Activated naive CD4-positive, alpha-beta T cell treated with anti-CD3 and anti-CD28 coated beads for 36 hours (primary cell): ENCODE measurements at regions of chr13 and their contacts with region 1.

Region 1: GRCh38 chr13:31424117-31424729 is 224.4 kb downstream of the B3GLCT start:
- DNase-seq: peak; percentile 77
- H3K4me3 Mint-ChIP-seq: no peak overlapping the region
- H3K27ac Mint-ChIP-seq: no peak overlapping the region
- H3K4me1 Mint-ChIP-seq: no peaks in the 10 kb centered on the region
- H3K27me3 Mint-ChIP-seq: peaks cover 12% of the 10 kb centered on the region

Region 2: DNA sequence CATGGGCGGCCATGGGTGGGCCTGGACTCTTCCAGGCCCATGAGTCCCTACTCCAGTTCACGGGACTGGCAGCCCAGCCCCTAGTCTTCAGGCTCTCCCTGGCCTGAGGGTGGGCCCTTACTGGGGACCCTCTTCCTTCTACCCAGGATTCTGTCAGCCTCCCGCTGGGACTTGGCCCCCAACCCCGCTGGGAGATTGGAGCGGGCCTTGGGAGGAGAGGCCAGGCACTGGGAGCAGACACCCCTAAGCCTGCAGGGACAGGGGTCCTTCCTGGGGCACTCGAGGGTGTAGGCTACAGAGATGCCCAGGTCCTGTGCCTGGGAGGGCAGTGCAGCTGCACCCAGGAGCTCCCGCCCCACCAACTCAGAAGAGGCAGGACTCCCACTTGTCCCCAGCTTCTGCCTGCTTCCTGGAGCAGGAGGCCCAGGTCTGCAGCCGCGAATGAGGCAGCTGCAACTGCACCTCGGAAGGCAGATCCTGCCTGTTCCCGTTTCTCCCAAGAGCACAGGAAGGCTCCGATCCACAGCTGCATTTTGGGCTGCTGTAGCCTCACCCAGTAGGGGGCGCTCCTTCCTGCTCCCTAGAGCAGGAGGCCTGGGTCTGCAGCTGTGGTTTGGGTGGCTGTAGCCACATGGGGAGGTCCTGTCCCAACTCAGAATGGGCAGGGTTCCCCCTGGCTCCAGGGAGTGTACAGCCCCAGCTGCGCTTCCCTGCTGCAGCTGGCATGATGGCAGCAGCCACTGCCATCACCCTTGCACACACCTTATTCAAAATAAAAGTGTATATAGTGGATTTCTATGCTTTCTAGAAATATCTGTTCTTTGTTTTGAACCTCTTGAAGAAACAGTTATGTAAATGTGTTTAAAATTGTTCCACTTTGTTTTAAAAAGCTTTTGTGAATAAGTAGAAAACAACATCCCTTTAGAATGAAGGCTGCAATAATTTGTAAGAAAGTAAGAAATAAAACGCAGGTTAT is 445.0 kb before region 1 on chr13:
- CTCF ChIA-PET with region 1: no interaction called
- intact Hi-C with region 1: loop called (anchors 10 kb)
- DNase-seq: peak; percentile 57
- H3K4me3 Mint-ChIP-seq: no peak overlapping the region
- H3K27ac Mint-ChIP-seq: no peak overlapping the region
- H3K4me1 Mint-ChIP-seq: no peaks in the 10 kb centered on the region
- H3K27me3 Mint-ChIP-seq: peaks cover 5% of the 10 kb centered on the region

Region 3: GRCh38 chr13:31199849-31200636 is 224.2 kb before region 1 on chr13 and contains the start of gene B3GLCT:
- CTCF ChIA-PET with region 1: no interaction called
- intact Hi-C with region 1: loop called (anchors 1 kb)
- DNase-seq: peak; percentile 65
- H3K4me3 Mint-ChIP-seq: peak within 1 kb of the TSS; percentile 83
- H3K27ac Mint-ChIP-seq: peak within 1 kb of the TSS; percentile 68
- H3K4me1 Mint-ChIP-seq: peaks cover 26% of the 10 kb centered on the region
- H3K27me3 Mint-ChIP-seq: no peaks in the 10 kb centered on the region
- total RNA-seq, gene B3GLCT: 1.2 to 1.5 TPM

Region 4: DNA sequence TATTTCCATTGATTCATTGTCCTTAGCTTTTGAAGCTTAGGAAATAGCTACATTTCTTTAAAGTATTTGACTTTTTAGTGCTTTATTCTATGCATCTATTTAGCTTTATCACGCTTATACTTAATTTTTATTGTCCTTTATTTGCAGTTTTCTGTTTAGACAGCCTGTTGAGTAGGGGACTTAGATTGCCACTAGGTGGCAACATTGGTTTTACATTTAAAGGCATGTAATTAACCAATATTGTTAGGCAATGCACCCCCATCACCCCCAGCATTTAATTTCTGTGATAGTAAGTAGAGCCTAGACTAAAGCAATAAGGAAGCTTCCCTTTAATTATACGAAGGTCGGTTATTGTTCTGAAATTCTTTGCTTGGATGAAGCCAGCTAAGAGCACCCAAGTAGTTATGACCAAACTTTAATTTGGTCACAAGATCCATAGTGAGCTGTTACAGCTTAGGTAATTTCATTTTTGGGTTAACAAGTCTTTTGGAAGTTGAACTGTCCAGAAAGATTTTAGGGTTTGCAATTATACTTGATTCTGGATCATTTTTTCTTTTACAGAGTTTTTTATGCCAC is 187.9 kb before region 1 on chr13:
- CTCF ChIA-PET with region 1: interaction called, 54 read pairs
- intact Hi-C with region 1: loop called (anchors 1 kb)
- DNase-seq: no peak
- H3K4me3 Mint-ChIP-seq: no peak overlapping the region
- H3K27ac Mint-ChIP-seq: no peak overlapping the region
- H3K4me1 Mint-ChIP-seq: no peaks in the 10 kb centered on the region
- H3K27me3 Mint-ChIP-seq: no peaks in the 10 kb centered on the region

Region 5: DNA sequence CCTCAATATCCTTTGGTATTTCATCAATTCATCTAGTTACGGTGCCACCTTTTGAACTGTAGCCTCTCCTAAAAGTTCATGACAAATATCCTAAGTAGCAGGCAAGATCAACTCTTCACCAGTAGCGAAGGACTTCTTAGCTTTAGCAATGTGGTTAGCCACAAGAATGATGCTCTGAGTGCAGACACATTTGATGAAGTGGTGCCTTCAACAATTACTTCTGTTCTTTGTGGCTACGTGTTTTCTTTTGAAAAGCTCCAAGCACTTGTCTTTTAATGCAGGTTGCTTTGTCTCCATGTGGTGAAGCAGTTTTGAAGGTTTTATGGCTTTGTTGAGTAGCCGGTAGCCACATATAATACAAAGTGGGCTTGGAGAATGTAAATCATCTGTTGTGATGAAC is 29.7 kb before region 1 on chr13:
- CTCF ChIA-PET with region 1: no interaction called
- intact Hi-C with region 1: no loop called
- DNase-seq: no peak
- H3K4me3 Mint-ChIP-seq: no peak overlapping the region
- H3K27ac Mint-ChIP-seq: no peak overlapping the region
- H3K4me1 Mint-ChIP-seq: no peaks in the 10 kb centered on the region
- H3K27me3 Mint-ChIP-seq: peaks cover 2% of the 10 kb centered on the region

Region 6: GRCh38 chr13:31409678-31410356 is 14.4 kb before region 1 on chr13:
- CTCF ChIA-PET with region 1: interaction called, 13 read pairs
- intact Hi-C with region 1: no loop called
- DNase-seq: no peak
- H3K4me3 Mint-ChIP-seq: no peak overlapping the region
- H3K27ac Mint-ChIP-seq: no peak overlapping the region
- H3K4me1 Mint-ChIP-seq: no peaks in the 10 kb centered on the region
- H3K27me3 Mint-ChIP-seq: no peaks in the 10 kb centered on the region

Region 7: GRCh38 chr13:31545616-31546015 is 121.4 kb after region 1 on chr13:
- CTCF ChIA-PET with region 1: no interaction called
- intact Hi-C with region 1: no loop called
- DNase-seq: no peak
- H3K4me3 Mint-ChIP-seq: no peak overlapping the region
- H3K27ac Mint-ChIP-seq: no peak overlapping the region
- H3K4me1 Mint-ChIP-seq: no peaks in the 10 kb centered on the region
- H3K27me3 Mint-ChIP-seq: no peaks in the 10 kb centered on the region